ENCODE measurements at regions of chr10 and their contacts with region 1.

Region 1: GRCh38 chr10:72364239-72364777 is 9.6 kb upstream of the DNAJB12 start:
- DNase-seq: peak; percentile 85 to 87 (median 86)
- H3K4me3 ChIP-seq: peak overlapping the region in 1 of 2 donors; percentile 31
- H3K4me3 Mint-ChIP-seq: peak overlapping the region in 6 of 8 donors; percentile 5 to 64 (median 44)
- H3K27ac ChIP-seq: peak overlapping the region; percentile 43
- H3K27ac Mint-ChIP-seq: peak overlapping the region; percentile 56 to 92 (median 87)
- H3K4me1 ChIP-seq: peaks cover 22% of the 10 kb centered on the region
- H3K4me1 Mint-ChIP-seq: peaks cover 8 to 40% (median 24%) of the 10 kb centered on the region in 4 donors
- H3K27me3 ChIP-seq: no peaks in the 10 kb centered on the region
- H3K27me3 Mint-ChIP-seq: no peaks in the 10 kb centered on the region

Region 2: GRCh38 chr10:72319416-72320254 is 44.7 kb before region 1 on chr10:
- CTCF ChIA-PET with region 1: no interaction called
- POLR2A ChIA-PET with region 1: no interaction called
- intact Hi-C with region 1: no loop called
- DNase-seq: peak; percentile 87 to 91 (median 89)
- H3K4me3 ChIP-seq: peak overlapping the region; percentile 46 to 55
- H3K4me3 Mint-ChIP-seq: peak overlapping the region; percentile 79 to 89 (median 84)
- H3K27ac ChIP-seq: peak overlapping the region; percentile 89
- H3K27ac Mint-ChIP-seq: peak overlapping the region; percentile 96 to 99 (median 99)
- H3K4me1 ChIP-seq: peaks cover 95% of the 10 kb centered on the region
- H3K4me1 Mint-ChIP-seq: peaks cover 53 to 92% (median 74%) of the 10 kb centered on the region in 4 donors
- H3K27me3 ChIP-seq: no peaks in the 10 kb centered on the region
- H3K27me3 Mint-ChIP-seq: no peaks in the 10 kb centered on the region

Region 3: DNA sequence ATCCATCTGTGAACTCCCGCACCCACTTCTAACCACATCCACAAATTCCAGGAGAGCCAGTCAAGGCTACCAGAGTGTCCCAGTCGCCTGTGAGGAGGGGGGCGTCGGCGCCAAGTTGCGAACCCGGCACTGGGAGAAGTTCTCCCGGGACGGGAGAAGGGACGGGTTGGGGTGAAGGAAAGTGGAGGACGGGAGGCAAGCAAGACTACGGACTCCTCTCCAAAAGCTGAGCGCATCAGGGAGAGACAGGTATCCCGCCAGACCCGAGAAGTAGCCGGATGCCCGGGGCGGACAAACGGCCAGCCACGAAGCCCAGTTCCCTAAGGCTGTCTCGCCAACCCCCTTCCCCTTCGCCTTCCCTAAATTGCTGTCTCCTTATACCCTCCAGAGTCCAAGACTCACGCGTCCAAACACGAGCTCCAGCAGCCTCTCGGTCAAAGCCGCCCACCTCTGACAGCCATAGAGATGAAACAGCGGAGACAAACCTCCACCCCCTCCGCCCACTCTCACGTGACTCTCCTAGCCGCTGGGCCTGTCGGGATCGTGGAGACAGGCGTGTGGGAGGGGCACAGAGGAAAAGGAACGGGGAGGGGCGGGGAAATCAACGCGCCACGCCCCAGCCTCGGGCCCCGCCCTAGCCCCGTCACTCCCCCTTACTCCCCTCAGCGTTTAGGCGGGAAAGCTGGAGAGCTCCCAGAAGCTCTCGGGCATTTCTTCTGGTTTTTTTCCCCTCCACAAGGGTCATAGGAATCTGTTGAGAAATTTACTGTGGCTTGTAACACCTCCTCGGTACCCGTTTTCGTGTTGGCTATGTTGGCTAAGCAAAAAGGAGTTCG is 261.5 kb after region 1 on chr10 and contains the start of gene MICU1:
- CTCF ChIA-PET with region 1: no interaction called
- POLR2A ChIA-PET with region 1: interaction called, 7 read pairs
- intact Hi-C with region 1: loop called (anchors 1 kb)
- DNase-seq: peak; percentile 89 to 95 (median 90)
- H3K4me3 ChIP-seq: peak within 1 kb of the TSS; percentile 82 to 96
- H3K4me3 Mint-ChIP-seq: peak within 1 kb of the TSS; percentile 98 to 100 (median 99)
- H3K27ac ChIP-seq: peak within 1 kb of the TSS; percentile 63
- H3K27ac Mint-ChIP-seq: peak within 1 kb of the TSS; percentile 39 to 99 (median 98)
- H3K4me1 ChIP-seq: peaks cover 22% of the 10 kb centered on the region
- H3K4me1 Mint-ChIP-seq: peaks cover 10 to 22% (median 18%) of the 10 kb centered on the region in 4 donors
- H3K27me3 ChIP-seq: no peaks in the 10 kb centered on the region
- H3K27me3 Mint-ChIP-seq: no peaks in the 10 kb centered on the region
- total RNA-seq, gene MICU1: 24.9 to 28.4 TPM

Region 4: GRCh38 chr10:72822342-72822986 is 458.2 kb after region 1 on chr10:
- CTCF ChIA-PET with region 1: interaction called, 10 read pairs
- POLR2A ChIA-PET with region 1: no interaction called
- intact Hi-C with region 1: no loop called
- DNase-seq: no peak
- H3K4me3 ChIP-seq: no peak overlapping the region
- H3K4me3 Mint-ChIP-seq: no peak overlapping the region
- H3K27ac ChIP-seq: no peak overlapping the region
- H3K27ac Mint-ChIP-seq: no peak overlapping the region
- H3K4me1 ChIP-seq: peaks cover 17% of the 10 kb centered on the region
- H3K4me1 Mint-ChIP-seq: peaks cover 9 to 15% (median 11%) of the 10 kb centered on the region in 4 donors
- H3K27me3 ChIP-seq: no peaks in the 10 kb centered on the region
- H3K27me3 Mint-ChIP-seq: no peaks in the 10 kb centered on the region

Region 5: GRCh38 chr10:72875250-72876055 is 511.1 kb after region 1 on chr10:
- CTCF ChIA-PET with region 1: interaction called, 16 read pairs
- POLR2A ChIA-PET with region 1: no interaction called
- intact Hi-C with region 1: loop called (anchors 1 kb)
- DNase-seq: peak in 4 of 5 donors; percentile 14 to 22 (median 20)
- H3K4me3 ChIP-seq: no peak overlapping the region
- H3K4me3 Mint-ChIP-seq: no peak overlapping the region
- H3K27ac ChIP-seq: no peak overlapping the region
- H3K27ac Mint-ChIP-seq: no peak overlapping the region
- H3K4me1 ChIP-seq: no peaks in the 10 kb centered on the region
- H3K4me1 Mint-ChIP-seq: no peaks in the 10 kb centered on the region
- H3K27me3 ChIP-seq: no peaks in the 10 kb centered on the region
- H3K27me3 Mint-ChIP-seq: no peaks in the 10 kb centered on the region

Region 6: DNA sequence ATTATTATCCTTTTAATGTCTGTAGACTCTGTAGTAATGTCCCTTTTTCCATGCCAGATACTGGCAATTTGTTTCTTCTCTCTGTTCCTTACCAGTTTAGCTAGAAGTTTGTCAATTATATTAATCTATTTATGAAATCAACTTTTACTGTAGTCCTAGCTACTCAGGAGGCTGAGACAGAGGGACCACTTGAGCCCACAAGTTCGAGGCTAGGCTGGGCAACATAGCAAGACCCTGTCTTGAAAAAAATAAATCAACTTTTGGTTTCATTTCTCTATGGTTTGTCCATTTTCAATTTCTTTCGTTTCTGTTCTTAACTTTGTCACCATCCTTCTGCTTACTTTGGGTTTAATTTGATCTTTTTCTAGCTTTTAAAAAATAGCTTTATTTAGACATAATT is 632.8 kb after region 1 on chr10:
- CTCF ChIA-PET with region 1: no interaction called
- POLR2A ChIA-PET with region 1: no interaction called
- intact Hi-C with region 1: no loop called
- DNase-seq: no peak
- H3K4me3 ChIP-seq: no peak overlapping the region
- H3K4me3 Mint-ChIP-seq: no peak overlapping the region
- H3K27ac ChIP-seq: no peak overlapping the region
- H3K27ac Mint-ChIP-seq: peak overlapping the region in 1 of 7 donors; percentile 2
- H3K4me1 ChIP-seq: no peaks in the 10 kb centered on the region
- H3K4me1 Mint-ChIP-seq: peaks cover 0 to under 1% (median 0%) of the 10 kb centered on the region in 4 donors
- H3K27me3 ChIP-seq: no peaks in the 10 kb centered on the region
- H3K27me3 Mint-ChIP-seq: no peaks in the 10 kb centered on the region

Region 7: GRCh38 chr10:73159038-73159648 is 794.8 kb after region 1 on chr10:
- CTCF ChIA-PET with region 1: interaction called, 6 read pairs
- POLR2A ChIA-PET with region 1: no interaction called
- intact Hi-C with region 1: loop called (anchors 1 kb)
- DNase-seq: peak; percentile 50 to 67 (median 57)
- H3K4me3 ChIP-seq: no peak overlapping the region
- H3K4me3 Mint-ChIP-seq: no peak overlapping the region
- H3K27ac ChIP-seq: no peak overlapping the region
- H3K27ac Mint-ChIP-seq: peak overlapping the region in 5 of 7 donors; percentile 25 to 81 (median 53)
- H3K4me1 ChIP-seq: peaks cover 30% of the 10 kb centered on the region
- H3K4me1 Mint-ChIP-seq: peaks cover 33 to 39% (median 35%) of the 10 kb centered on the region in 4 donors
- H3K27me3 ChIP-seq: no peaks in the 10 kb centered on the region
- H3K27me3 Mint-ChIP-seq: no peaks in the 10 kb centered on the region